Activated CD8-positive, alpha-beta T cell treated with anti-CD3 and anti-CD28 coated beads, Interleukin-2, amount 10 ng/mL, durations not matched to agents 7 days and 5 days (primary cell): ENCODE measurements at regions of chr19 and their contacts with region 1.

Region 1: DNA sequence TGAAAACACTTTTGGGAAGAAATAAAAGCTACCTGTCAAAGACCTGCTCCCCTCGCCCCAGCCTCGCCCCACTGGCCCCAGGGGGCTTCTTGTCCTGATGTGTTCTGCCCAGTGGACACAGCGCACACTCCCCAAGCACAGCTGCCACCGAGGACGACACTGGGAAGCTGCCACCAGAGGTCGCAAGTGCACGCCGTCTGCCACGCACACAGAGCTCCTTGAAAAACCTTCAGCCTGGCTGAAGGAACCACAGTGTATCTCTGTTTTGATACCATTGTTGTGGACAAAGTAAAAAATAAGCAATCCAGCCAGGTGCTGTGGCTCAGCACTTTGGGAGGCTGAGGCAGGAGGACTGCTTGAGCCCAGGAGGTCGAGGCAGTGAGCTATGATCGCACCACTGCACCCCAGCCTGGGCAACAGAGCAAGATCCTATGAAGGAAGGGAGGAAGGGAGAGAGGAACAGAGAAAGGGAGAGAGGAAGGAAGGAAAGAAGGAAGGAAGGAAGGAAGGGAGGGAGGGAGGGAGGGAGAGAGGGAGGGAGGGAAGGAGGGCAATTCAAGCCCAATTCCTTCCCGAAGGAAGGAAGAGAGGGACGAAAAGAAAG is 57.3 kb downstream of the CEBPG start:
- DNase-seq: peak; percentile 73
- ATAC-seq: peak; percentile 94
- H3K4me3 Mint-ChIP-seq: peak overlapping the region; percentile 26
- H3K27ac Mint-ChIP-seq: peak overlapping the region; percentile 57
- H3K4me1 Mint-ChIP-seq: peaks cover 10% of the 10 kb centered on the region
- H3K27me3 Mint-ChIP-seq: no peaks in the 10 kb centered on the region

Region 2: GRCh38 chr19:33416307-33417215 is 14.2 kb before region 1 on chr19:
- CTCF ChIA-PET with region 1: interaction called, 21 read pairs
- POLR2A ChIA-PET with region 1: no interaction called
- DNase-seq: peak; percentile 79
- ATAC-seq: peak; percentile 89
- H3K4me3 Mint-ChIP-seq: no peak overlapping the region
- H3K27ac Mint-ChIP-seq: no peak overlapping the region
- H3K4me1 Mint-ChIP-seq: peaks cover 8% of the 10 kb centered on the region
- H3K27me3 Mint-ChIP-seq: no peaks in the 10 kb centered on the region

Region 3: DNA sequence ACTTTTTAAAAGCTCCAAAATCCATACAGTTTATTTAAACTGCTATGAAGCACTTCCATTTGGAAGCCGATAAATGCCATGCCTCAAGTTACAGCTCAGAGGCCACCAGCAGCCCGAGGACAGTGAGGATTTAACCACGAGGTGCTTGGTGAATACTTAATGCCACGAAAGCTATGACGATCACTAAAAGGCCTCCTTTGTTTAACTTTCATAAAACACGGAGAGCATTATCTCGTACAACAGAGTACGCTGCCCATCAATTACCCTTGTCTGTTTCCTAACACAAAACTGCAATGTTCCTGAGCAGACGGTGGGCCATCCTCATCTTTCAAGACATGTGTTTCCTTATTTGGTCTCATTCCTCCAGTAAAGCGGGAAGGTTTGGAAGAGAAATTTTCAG is 32.4 kb after region 1 on chr19:
- CTCF ChIA-PET with region 1: interaction called, 10 read pairs
- POLR2A ChIA-PET with region 1: no interaction called
- DNase-seq: no peak
- ATAC-seq: no peak
- H3K4me3 Mint-ChIP-seq: no peak overlapping the region
- H3K27ac Mint-ChIP-seq: no peak overlapping the region
- H3K4me1 Mint-ChIP-seq: no peaks in the 10 kb centered on the region
- H3K27me3 Mint-ChIP-seq: no peaks in the 10 kb centered on the region

Region 4: DNA sequence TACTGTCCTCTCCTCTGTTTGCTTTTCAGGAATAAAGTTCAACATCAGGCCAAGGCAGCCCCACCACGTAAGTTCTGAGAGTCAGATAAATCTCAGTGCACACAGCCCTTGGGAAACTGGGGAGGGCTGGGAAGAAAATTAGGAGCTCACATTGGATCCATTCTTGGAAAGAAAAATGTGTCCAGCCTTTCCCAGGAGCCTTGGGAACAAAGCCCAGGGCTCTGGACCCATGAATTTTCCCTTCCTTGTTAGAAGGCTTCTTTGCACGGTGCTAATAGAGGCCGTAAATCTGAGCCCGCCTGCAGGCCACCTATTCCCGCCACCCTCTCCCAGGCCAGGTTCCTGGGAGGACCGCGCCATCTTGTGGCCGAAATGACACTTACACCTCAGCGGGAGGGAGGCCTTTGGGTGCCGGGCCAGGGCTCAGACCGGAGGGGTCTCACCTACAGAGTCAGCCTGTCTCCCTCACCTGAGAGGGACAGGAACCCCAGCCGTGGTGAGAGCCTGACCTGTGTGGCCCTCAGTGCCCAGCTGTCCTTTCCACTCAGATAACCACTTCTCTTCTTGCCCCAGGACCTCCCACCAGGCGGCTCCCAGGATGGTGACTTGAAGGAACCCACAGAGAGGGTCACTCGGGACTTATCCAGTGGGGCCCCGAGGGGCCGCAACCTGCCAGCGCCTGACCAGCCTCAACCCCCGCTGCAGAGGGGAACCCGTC is 340.8 kb after region 1 on chr19:
- CTCF ChIA-PET with region 1: interaction called, 25 read pairs
- POLR2A ChIA-PET with region 1: no interaction called
- DNase-seq: peak; percentile 70
- ATAC-seq: peak; percentile 80
- H3K4me3 Mint-ChIP-seq: no peak overlapping the region
- H3K27ac Mint-ChIP-seq: no peak overlapping the region
- H3K4me1 Mint-ChIP-seq: no peaks in the 10 kb centered on the region
- H3K27me3 Mint-ChIP-seq: no peaks in the 10 kb centered on the region